PC-3 (cell line): ENCODE measurements at regions of chr13 and their contacts with region 1.

Region 1: DNA sequence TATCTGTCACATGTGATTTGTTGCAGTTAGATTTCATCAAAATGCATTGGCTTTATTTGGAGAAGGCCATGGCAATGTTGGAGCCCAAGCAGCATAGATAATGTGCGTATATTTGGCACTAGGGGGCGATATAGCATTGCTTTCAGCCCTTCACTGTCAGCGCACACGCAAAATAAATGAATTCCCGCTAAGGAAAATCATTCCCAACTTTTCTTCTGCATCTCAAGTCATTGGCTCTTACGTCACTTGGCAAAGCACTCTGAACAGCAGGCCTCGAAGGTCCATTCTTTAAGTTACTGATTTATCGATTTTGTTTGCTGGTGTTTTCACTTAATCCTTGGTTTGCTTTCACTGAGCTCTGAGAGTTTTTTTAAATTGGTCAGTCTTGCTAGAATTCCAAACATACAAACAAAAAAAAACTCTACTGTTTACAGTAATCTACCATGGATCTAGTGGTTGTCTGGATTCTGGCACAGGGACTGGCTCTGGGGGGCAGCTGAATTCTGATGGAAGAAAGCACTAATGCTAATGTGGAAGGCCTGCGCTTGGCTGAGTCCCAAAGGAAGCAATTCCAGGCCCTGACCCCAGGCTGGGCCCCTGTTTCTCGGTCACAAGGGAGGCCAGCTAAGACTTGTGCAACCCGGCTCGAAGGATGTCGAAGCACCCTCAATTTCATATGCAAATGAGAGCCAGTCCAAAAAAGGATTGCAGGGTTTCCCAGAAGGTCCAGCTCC is 97.7 kb upstream of the IPO5 start:
- DNase-seq: peak; percentile 77
- ATAC-seq: peak; percentile 64
- H3K4me3 ChIP-seq: no peak overlapping the region
- H3K27ac ChIP-seq: no peak overlapping the region
- H3K4me1 ChIP-seq: peaks cover 21% of the 10 kb centered on the region
- H3K27me3 ChIP-seq: no peaks in the 10 kb centered on the region
- CTCF ChIP-seq: peak; percentile 79

Region 2: GRCh38 chr13:97432917-97433726 is 422.6 kb before region 1 on chr13:
- CTCF ChIA-PET with region 1: no interaction called
- POLR2A ChIA-PET with region 1: no interaction called
- intact Hi-C with region 1: no loop called
- DNase-seq: peak; percentile 96
- ATAC-seq: peak; percentile 80
- H3K4me3 ChIP-seq: peak overlapping the region; percentile 99
- H3K27ac ChIP-seq: peak overlapping the region; percentile 94
- H3K4me1 ChIP-seq: peaks cover 9% of the 10 kb centered on the region
- H3K27me3 ChIP-seq: no peaks in the 10 kb centered on the region
- CTCF ChIP-seq: no peak

Region 3: DNA sequence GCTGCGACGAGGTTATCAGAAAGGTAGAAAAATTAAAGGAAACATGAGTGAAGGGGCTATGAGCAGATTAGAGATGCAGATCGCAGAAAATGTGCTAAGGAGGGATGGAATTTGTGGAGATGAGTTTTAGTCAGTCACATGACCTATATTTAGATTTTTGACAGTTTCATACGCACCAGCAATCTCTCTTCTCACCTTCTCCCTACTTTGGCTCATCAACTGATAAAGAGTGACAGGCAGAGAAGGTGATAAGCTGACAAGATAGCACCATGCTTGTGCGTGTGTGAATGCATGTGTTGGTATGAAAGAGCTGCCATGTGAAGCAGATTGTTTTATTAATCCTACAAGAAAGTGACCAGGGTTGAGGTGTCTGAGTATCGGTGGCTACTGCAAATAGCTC is 169.1 kb before region 1 on chr13:
- CTCF ChIA-PET with region 1: no interaction called
- POLR2A ChIA-PET with region 1: no interaction called
- intact Hi-C with region 1: no loop called
- DNase-seq: no peak
- ATAC-seq: no peak
- H3K4me3 ChIP-seq: no peak overlapping the region
- H3K27ac ChIP-seq: no peak overlapping the region
- H3K4me1 ChIP-seq: no peaks in the 10 kb centered on the region
- H3K27me3 ChIP-seq: peaks cover 13% of the 10 kb centered on the region; the same call in 1 of the 2 replicates
- CTCF ChIP-seq: no peak

Region 4: DNA sequence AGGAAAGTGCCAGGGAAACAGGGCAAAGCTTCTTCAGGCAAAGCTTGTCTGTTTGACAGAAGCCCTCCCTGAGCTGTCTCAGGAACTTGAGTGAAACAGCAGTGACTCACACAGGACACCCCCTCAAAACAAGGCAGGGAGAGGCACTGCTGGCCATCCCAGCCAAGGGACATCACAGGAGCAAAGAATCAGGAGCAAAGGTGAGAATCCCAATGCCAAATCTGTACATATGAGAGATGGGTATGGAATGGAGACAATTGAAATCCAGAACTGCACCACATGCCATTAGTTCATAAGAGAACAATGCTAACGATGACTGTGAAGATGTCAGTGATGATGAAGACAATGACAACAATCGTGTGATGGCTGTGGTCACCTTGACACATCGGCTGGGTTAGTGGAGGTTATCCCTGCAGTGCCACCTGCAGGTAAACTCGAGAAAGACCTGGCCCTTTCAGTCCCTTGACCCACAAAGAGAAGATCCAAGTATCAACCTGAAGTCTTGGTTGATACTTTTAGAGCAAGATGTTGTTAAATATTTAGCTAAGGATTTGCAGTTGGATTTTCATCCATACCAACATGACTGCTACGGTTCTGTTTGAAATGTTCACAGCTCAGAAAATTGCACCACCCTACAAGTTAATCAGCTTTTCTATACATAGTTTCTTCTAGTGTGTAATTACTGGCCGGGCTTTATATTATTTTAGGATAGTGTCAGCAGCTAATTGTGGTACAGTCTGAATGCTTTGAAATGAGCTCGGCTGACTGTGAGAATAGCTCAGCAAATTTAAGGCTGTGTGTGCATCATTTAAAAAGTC is 55.8 kb after region 1 on chr13:
- CTCF ChIA-PET with region 1: no interaction called
- POLR2A ChIA-PET with region 1: no interaction called
- intact Hi-C with region 1: loop called (anchors 2 kb)
- DNase-seq: peak; percentile 59
- ATAC-seq: peak; percentile 69
- H3K4me3 ChIP-seq: no peak overlapping the region
- H3K27ac ChIP-seq: no peak overlapping the region
- H3K4me1 ChIP-seq: peaks cover 10% of the 10 kb centered on the region; the same call in 1 of the 2 replicates
- H3K27me3 ChIP-seq: no peaks in the 10 kb centered on the region
- CTCF ChIP-seq: peak; percentile 66

Region 5: DNA sequence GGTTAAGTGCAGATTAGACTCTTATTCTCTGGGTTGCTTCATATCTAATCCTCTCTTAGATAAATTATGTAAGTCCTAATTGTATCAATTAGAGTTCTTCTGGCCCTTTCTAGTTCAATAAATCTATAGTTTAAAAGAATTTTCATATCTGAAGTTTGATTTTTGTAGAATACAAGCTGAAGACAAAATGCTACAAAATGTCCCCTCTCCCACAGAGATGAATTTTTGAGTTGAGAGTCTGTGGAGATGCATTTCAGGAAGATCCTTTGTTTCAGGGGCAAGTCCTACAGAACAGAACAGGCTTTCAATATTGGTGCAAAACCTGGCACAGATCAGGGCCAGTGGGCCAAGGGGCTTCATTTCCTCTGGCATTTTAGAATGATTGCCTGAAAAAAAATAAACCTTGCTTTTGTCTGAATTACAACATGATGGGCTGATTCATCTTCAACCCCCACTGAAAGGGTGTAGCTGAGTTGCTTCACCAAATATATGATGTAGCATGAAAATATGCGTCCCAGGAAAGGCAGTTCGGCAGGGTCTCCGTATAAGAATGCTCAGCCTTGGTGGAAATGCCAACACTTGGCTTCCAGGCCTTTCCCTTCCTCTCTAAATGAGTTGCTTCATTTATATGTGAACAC is 91.3 kb after region 1 on chr13:
- CTCF ChIA-PET with region 1: no interaction called
- POLR2A ChIA-PET with region 1: no interaction called
- intact Hi-C with region 1: loop called (anchors 1 kb)
- DNase-seq: peak; percentile 91
- ATAC-seq: peak; percentile 68
- H3K4me3 ChIP-seq: no peak overlapping the region
- H3K27ac ChIP-seq: peak overlapping the region; percentile 98
- H3K4me1 ChIP-seq: peaks cover 57% of the 10 kb centered on the region
- H3K27me3 ChIP-seq: no peaks in the 10 kb centered on the region
- CTCF ChIP-seq: no peak

Region 6: GRCh38 chr13:97961340-97961739 is 105.6 kb after region 1 on chr13:
- CTCF ChIA-PET with region 1: no interaction called
- POLR2A ChIA-PET with region 1: no interaction called
- intact Hi-C with region 1: no loop called
- DNase-seq: no peak
- ATAC-seq: no peak
- H3K4me3 ChIP-seq: no peak overlapping the region
- H3K27ac ChIP-seq: no peak overlapping the region
- H3K4me1 ChIP-seq: no peaks in the 10 kb centered on the region
- H3K27me3 ChIP-seq: no peaks in the 10 kb centered on the region
- CTCF ChIP-seq: no peak

Region 7: DNA sequence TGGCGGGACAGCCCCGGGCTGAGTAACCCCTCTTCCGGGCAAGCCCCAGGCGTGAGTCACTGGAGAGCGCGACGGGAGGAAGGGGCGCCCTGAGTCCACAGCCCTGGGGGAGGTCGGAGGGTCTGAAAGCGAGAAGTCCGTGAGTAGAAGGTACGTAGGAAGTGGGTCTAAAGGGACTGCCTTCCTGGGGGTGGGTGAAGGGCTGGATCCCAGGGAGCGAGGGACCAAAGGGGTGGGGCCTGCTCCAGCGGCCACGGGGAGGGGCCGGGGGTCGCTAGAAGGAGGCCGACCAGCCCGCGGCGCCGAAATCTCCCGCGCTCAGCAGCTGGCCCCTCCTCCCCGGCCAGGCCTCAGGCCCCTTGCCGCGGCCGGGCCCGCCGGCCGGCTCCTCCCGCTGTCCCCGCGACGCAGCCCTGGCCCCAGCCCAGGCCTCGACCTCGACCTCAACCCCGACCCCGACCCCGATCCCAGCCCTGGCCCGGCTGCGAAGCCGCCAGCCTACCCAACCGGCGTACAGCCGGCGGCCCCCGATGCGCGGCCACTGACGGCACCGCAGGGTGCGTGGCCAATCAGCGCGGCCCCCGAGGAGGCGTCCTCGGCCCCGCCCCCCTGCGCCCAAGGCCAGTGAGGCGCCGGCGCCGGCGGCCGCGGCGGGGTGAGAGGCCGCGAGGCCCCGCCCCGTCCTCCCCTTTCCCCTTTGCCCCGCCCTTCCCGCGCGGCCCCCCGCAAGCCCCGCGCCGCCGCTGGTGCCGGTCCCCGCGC is 120.3 kb after region 1 on chr13:
- CTCF ChIA-PET with region 1: no interaction called
- POLR2A ChIA-PET with region 1: interaction called, 5 read pairs
- intact Hi-C with region 1: loop called (anchors 1 kb)
- DNase-seq: peak; percentile 89
- ATAC-seq: peak; percentile 86
- H3K4me3 ChIP-seq: peak overlapping the region; percentile 95
- H3K27ac ChIP-seq: peak overlapping the region; percentile 73
- H3K4me1 ChIP-seq: peaks cover 24% of the 10 kb centered on the region
- H3K27me3 ChIP-seq: no peaks in the 10 kb centered on the region
- CTCF ChIP-seq: no peak

Region 8: GRCh38 chr13:98004111-98004510 is 148.4 kb after region 1 on chr13:
- CTCF ChIA-PET with region 1: no interaction called
- POLR2A ChIA-PET with region 1: no interaction called
- intact Hi-C with region 1: loop called (anchors 5 kb)
- DNase-seq: peak; percentile 25
- ATAC-seq: peak; percentile 70
- H3K4me3 ChIP-seq: no peak overlapping the region
- H3K27ac ChIP-seq: no peak overlapping the region
- H3K4me1 ChIP-seq: no peaks in the 10 kb centered on the region
- H3K27me3 ChIP-seq: no peaks in the 10 kb centered on the region
- CTCF ChIP-seq: no peak

Region 9: DNA sequence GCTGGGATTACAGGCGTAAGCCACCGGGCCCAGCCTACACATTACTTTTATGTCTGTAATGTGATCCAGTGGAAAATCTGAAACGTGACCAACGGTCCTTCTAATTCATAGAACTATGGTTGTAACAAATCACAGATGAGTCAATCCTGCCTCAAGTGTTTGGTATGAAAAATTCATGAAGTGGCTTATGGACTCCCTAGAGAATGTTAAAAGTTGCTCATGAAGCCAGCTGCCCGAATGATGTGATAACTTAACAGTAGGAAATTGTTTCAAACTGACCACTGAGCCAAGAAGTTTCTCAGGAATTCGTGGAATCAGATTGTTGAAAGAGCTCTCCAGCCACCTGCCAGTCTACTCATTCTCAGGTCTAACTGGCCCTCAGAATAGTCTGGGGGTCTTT is 227.8 kb after region 1 on chr13:
- CTCF ChIA-PET with region 1: no interaction called
- POLR2A ChIA-PET with region 1: no interaction called
- intact Hi-C with region 1: no loop called
- DNase-seq: peak; percentile 41
- ATAC-seq: no peak
- H3K4me3 ChIP-seq: no peak overlapping the region
- H3K27ac ChIP-seq: no peak overlapping the region
- H3K4me1 ChIP-seq: no peaks in the 10 kb centered on the region
- H3K27me3 ChIP-seq: no peaks in the 10 kb centered on the region
- CTCF ChIP-seq: no peak